CD8-positive, alpha-beta memory T cell (primary cell): ENCODE measurements at regions of chr17 and their contacts with region 1.

Region 1: GRCh38 chr17:29180034-29180787 is at the start of gene MYO18A:
- DNase-seq: peak; percentile 68 to 83 (median 71)
- H3K4me3 ChIP-seq: peak within 1 kb of the TSS; percentile 46
- H3K4me3 Mint-ChIP-seq: peak within 1 kb of the TSS; percentile 65 to 91 (median 73)
- H3K27ac ChIP-seq: peak within 1 kb of the TSS; percentile 35
- H3K27ac Mint-ChIP-seq: peak within 1 kb of the TSS in 5 of 8 donors; percentile 10 to 63 (median 45)
- H3K4me1 ChIP-seq: peaks cover 17% of the 10 kb centered on the region
- H3K4me1 Mint-ChIP-seq: peaks cover 23 to 38% (median 26%) of the 10 kb centered on the region in 3 donors
- H3K27me3 ChIP-seq: no peaks in the 10 kb centered on the region
- H3K27me3 Mint-ChIP-seq: peaks cover 4% of the 10 kb centered on the region in 2 donors
- total RNA-seq, gene MYO18A: 34.0 to 39.7 TPM

Region 2: GRCh38 chr17:29140051-29140621 is 40.1 kb before region 1 on chr17:
- CTCF ChIA-PET with region 1: interaction called, 211 read pairs
- POLR2A ChIA-PET with region 1: interaction called, 13 read pairs
- DNase-seq: peak; percentile 70 to 91 (median 74)
- H3K4me3 ChIP-seq: peak overlapping the region; percentile 62
- H3K4me3 Mint-ChIP-seq: peak overlapping the region; percentile 87 to 97 (median 95)
- H3K27ac ChIP-seq: peak overlapping the region; percentile 48
- H3K27ac Mint-ChIP-seq: peak overlapping the region; percentile 97 to 99 (median 98)
- H3K4me1 ChIP-seq: peaks cover 56% of the 10 kb centered on the region
- H3K4me1 Mint-ChIP-seq: peaks cover 61 to 90% (median 76%) of the 10 kb centered on the region in 3 donors
- H3K27me3 ChIP-seq: no peaks in the 10 kb centered on the region
- H3K27me3 Mint-ChIP-seq: peaks cover 0 to 2% of the 10 kb centered on the region in 2 donors

Region 3: DNA sequence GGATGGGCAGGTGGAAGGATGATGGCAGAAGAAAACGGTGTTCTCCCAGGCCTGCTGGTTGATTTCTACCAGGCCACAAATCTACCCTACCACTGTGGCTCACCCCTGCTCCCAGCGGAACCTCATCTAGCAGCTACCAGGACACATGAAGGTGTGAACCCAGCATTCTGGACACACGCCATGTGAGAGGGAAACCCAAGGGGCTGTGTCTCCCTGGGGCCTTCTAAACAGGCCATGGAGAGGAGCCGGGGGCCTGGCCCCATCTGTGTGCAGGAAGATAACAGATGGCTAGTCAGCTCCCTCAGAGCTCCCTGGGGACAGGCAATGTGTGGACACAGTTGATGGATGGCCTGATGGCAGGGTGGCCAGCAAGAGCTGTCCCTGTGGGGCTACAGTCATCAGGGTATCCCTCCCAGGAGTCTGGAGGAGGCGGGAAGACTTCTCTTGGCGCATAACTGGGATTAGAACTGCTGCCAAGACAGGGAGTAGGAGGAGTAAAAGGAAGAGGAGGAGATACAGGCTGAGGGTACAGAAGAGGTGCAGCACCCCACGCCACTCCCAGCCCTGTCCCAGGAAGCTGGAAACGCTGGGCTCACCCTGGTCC is 17.4 kb before region 1 on chr17:
- CTCF ChIA-PET with region 1: interaction called, 14 read pairs
- POLR2A ChIA-PET with region 1: interaction called, 7 read pairs
- DNase-seq: no peak
- H3K4me3 ChIP-seq: no peak overlapping the region
- H3K4me3 Mint-ChIP-seq: no peak overlapping the region
- H3K27ac ChIP-seq: no peak overlapping the region
- H3K27ac Mint-ChIP-seq: no peak overlapping the region
- H3K4me1 ChIP-seq: peaks cover 12% of the 10 kb centered on the region
- H3K4me1 Mint-ChIP-seq: peaks cover 15 to 30% (median 16%) of the 10 kb centered on the region in 3 donors
- H3K27me3 ChIP-seq: no peaks in the 10 kb centered on the region
- H3K27me3 Mint-ChIP-seq: no peaks in the 10 kb centered on the region

Region 4: GRCh38 chr17:29219378-29220047 is 39.3 kb after region 1 on chr17:
- CTCF ChIA-PET with region 1: interaction called, 12 read pairs
- POLR2A ChIA-PET with region 1: no interaction called
- DNase-seq: peak; percentile 57 to 79 (median 63)
- H3K4me3 ChIP-seq: no peak overlapping the region
- H3K4me3 Mint-ChIP-seq: peak overlapping the region in 1 of 7 donors; percentile 13
- H3K27ac ChIP-seq: no peak overlapping the region
- H3K27ac Mint-ChIP-seq: peak overlapping the region in 3 of 8 donors; percentile 17 to 54 (median 26)
- H3K4me1 ChIP-seq: peaks cover 4% of the 10 kb centered on the region
- H3K4me1 Mint-ChIP-seq: peaks cover 8 to 10% (median 9%) of the 10 kb centered on the region in 3 donors
- H3K27me3 ChIP-seq: no peaks in the 10 kb centered on the region
- H3K27me3 Mint-ChIP-seq: peaks cover 0 to 7% of the 10 kb centered on the region in 2 donors